CD8-positive, alpha-beta memory T cell (primary cell): ENCODE measurements at regions of chr1 and their contacts with region 1.

Region 1: GRCh38 chr1:65048335-65048734 is 82.0 kb upstream of the JAK1 start:
- DNase-seq: no peak
- H3K4me3 ChIP-seq: no peak overlapping the region
- H3K4me3 Mint-ChIP-seq: no peak overlapping the region
- H3K27ac ChIP-seq: no peak overlapping the region
- H3K27ac Mint-ChIP-seq: peak overlapping the region in 2 of 8 donors; percentile 38 to 42
- H3K4me1 ChIP-seq: peaks cover 35% of the 10 kb centered on the region
- H3K4me1 Mint-ChIP-seq: peaks cover 47 to 69% (median 65%) of the 10 kb centered on the region in 3 donors
- H3K27me3 ChIP-seq: no peaks in the 10 kb centered on the region
- H3K27me3 Mint-ChIP-seq: no peaks in the 10 kb centered on the region

Region 2: GRCh38 chr1:64745986-64746940 is 302.1 kb before region 1 on chr1:
- CTCF ChIA-PET with region 1: no interaction called
- POLR2A ChIA-PET with region 1: interaction called, 10 read pairs
- DNase-seq: no peak
- H3K4me3 ChIP-seq: no peak overlapping the region
- H3K4me3 Mint-ChIP-seq: peak overlapping the region; percentile 86 to 97 (median 90)
- H3K27ac ChIP-seq: peak overlapping the region; percentile 11
- H3K27ac Mint-ChIP-seq: peak overlapping the region; percentile 62 to 94 (median 89)
- H3K4me1 ChIP-seq: peaks cover 11% of the 10 kb centered on the region
- H3K4me1 Mint-ChIP-seq: peaks cover 15 to 49% (median 26%) of the 10 kb centered on the region in 3 donors
- H3K27me3 ChIP-seq: no peaks in the 10 kb centered on the region
- H3K27me3 Mint-ChIP-seq: no peaks in the 10 kb centered on the region

Region 3: GRCh38 chr1:65083263-65083896 is 35.0 kb after region 1 on chr1:
- CTCF ChIA-PET with region 1: no interaction called
- POLR2A ChIA-PET with region 1: no interaction called
- DNase-seq: no peak
- H3K4me3 ChIP-seq: no peak overlapping the region
- H3K4me3 Mint-ChIP-seq: no peak overlapping the region
- H3K27ac ChIP-seq: no peak overlapping the region
- H3K27ac Mint-ChIP-seq: no peak overlapping the region
- H3K4me1 ChIP-seq: no peaks in the 10 kb centered on the region
- H3K4me1 Mint-ChIP-seq: no peaks in the 10 kb centered on the region
- H3K27me3 ChIP-seq: no peaks in the 10 kb centered on the region
- H3K27me3 Mint-ChIP-seq: peaks cover 7 to 22% of the 10 kb centered on the region in 2 donors